Sigmoid colon (tissue), 7 donors: ENCODE measurements at regions of chr15 and their contacts with region 1.

Region 1: DNA sequence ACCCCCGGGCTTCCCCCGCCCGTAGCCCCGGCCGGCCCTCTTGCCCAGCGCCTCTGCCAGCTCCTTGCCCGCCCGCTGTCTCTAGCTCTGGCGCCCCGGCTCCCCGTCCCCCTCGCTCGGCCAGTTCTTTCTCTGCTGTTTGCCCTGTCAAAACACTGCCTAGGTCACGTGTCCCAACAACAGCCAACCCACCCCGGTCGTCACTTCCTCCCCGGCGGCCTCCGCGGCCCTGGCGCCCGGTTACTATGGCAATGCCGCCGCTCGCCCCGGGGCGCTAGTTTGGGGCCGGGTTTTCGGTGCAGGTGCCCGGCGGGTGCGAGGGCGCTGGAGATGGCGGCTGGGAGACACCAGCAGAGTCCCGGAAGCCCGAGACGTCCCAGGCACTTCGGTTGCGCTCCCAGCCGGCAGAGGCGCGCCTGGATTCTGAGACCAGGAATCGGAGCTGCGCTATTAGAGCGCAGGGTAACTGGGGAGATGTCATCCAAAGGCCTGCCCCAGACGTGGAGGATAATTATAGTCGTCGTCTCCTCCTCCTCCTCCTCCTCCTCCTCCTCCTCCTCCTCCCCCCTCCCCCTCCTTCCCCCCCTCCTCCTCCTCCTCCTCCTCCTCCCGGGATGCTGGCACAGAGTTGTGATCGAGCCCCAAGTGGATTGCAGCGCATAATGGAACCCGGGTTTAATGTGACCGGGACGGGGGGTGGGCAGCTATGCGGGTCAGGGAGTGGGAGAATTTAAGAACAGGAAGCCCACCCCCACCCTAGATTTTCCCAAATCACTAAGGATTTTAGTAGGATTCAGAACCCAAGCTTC is at the start of gene ATOSA:
- DNase-seq: peak; percentile 96
- H3K4me3 ChIP-seq: peak within 1 kb of the TSS; percentile 66 to 98 (median 93)
- H3K27ac ChIP-seq: peak within 1 kb of the TSS; percentile 89 to 100 (median 98)
- H3K4me1 ChIP-seq: peaks cover 0 to 44% (median 36%) of the 10 kb centered on the region in 4 donors
- H3K27me3 ChIP-seq: no peaks in the 10 kb centered on the region
- CTCF ChIP-seq: no peak
- EP300 ChIP-seq: no peak
- POLR2A ChIP-seq: peak; percentile 55
- total RNA-seq, gene ATOSA: 50.1 to 90.3 (median 82.2) TPM

Region 2: GRCh38 chr15:52528991-52529926 is 150.2 kb before region 1 on chr15:
- intact Hi-C with region 1: loop called (anchors 2 kb)
- DNase-seq: peak; percentile 84
- H3K4me3 ChIP-seq: peak overlapping the region; percentile 36 to 91 (median 78)
- H3K27ac ChIP-seq: peak overlapping the region; percentile 83 to 89 (median 88)
- H3K4me1 ChIP-seq: peaks cover 0 to 20% (median 9%) of the 10 kb centered on the region in 4 donors
- H3K27me3 ChIP-seq: no peaks in the 10 kb centered on the region
- CTCF ChIP-seq: no peak
- EP300 ChIP-seq: no peak
- POLR2A ChIP-seq: no peak

Region 3: DNA sequence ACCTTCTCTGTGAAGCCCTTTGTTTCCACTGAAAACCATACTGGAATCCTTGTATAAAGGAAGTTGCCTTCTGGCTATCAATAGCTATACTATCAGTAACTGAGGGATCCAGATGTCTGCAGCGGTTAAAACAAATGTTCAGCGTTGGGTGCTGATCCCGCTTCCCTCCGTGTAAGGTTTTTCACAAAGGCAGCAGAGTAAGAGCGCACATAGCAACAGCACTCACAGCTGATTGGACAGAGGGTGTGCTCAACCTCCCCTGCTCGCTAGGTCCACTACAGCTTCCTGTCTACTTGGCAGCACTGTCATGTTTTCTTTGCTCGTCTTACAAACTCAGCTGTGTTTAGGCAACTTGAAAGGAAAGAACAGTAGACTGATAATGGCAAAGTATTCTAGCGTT is 27.6 kb before region 1 on chr15:
- intact Hi-C with region 1: loop called (anchors 2 kb)
- DNase-seq: peak; percentile 87
- H3K4me3 ChIP-seq: peak overlapping the region in 3 of 4 donors; percentile 22 to 41 (median 37)
- H3K27ac ChIP-seq: peak overlapping the region; percentile 68 to 79 (median 76)
- H3K4me1 ChIP-seq: peaks cover 2 to 65% (median 47%) of the 10 kb centered on the region in 4 donors
- H3K27me3 ChIP-seq: no peaks in the 10 kb centered on the region
- CTCF ChIP-seq: no peak
- EP300 ChIP-seq: no peak
- POLR2A ChIP-seq: no peak

Region 4: DNA sequence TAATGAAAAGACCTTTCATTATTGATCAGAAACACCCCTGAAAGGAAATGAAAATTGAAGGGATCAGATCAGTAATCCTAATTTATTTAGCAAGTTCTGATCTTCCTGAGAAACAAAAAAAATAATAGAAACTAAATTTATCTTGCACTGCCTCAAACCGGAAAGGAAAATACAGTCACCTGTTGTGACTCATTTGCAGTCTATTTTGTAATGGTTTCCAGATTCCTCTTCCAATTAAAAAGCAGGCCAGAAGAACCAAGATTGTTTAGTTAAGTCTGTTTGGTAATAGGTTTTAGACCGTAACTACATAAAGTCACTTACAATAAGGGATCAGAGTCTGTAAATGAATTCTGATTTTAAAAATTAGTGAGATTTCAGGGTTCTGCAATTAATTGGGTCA is 49.5 kb after region 1 on chr15:
- intact Hi-C with region 1: loop called (anchors 5 kb)
- DNase-seq: no peak
- H3K4me3 ChIP-seq: no peak overlapping the region
- H3K27ac ChIP-seq: no peak overlapping the region
- H3K4me1 ChIP-seq: peaks cover 0 to 4% (median 0%) of the 10 kb centered on the region in 4 donors
- H3K27me3 ChIP-seq: no peaks in the 10 kb centered on the region
- CTCF ChIP-seq: no peak
- EP300 ChIP-seq: no peak
- POLR2A ChIP-seq: no peak